Thyroid gland (tissue), 4 donors: ENCODE measurements at regions of chr14 and their contacts with region 1.

Region 1: DNA sequence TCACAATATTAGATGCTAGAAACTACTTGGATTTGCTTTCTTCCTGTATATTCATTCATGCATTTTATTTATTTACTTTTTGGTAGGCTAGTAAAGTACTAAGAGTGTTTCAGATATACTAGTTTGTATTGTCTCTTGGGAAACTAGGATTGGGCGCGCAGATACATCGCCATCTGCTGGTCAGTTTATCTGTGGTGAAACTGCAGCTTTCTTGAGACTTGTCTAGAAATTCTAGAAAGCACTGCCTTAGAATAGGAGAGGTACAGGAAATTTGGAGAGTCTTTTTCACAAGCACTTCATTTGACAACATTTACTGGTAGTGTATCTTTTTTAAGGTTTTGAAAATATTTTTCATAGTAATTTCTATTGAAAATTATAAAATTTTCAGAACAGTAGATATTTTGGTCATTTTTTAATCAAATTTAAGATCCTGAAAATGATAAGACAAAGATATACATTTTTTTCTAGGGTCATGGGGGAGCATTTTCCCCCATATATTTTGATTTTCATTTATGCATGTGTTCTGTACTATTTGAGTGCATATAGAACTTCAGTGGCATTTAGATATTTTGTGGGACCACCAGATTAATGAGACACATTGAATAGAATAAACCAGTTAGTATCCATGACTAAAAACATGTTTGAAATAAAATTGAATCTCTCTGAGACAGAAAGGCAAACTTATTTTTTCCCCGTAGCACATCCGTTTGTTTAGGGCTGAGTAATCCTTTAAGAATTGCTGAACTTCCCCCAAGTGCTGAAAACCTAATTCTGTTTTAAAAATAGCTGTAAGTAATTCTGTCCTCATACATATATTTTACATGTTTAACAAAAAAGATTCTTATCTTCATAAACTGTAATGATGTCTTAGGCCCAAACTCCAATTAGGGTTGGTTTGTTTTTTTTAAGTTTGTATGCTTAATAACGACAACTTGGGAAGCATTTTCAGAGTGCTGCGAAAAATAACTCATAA is 44.5 kb downstream of the SLC38A6 start:
- DNase-seq: peak; percentile 47 to 50
- H3K4me3 ChIP-seq: no peak overlapping the region
- H3K27ac ChIP-seq: peak overlapping the region in 1 of 3 donors; percentile 1
- H3K4me1 ChIP-seq: no peaks in the 10 kb centered on the region
- H3K27me3 ChIP-seq: no peaks in the 10 kb centered on the region
- CTCF ChIP-seq: peak; percentile 59 to 93 (median 74)
- POLR2A ChIP-seq: no peak

Region 2: DNA sequence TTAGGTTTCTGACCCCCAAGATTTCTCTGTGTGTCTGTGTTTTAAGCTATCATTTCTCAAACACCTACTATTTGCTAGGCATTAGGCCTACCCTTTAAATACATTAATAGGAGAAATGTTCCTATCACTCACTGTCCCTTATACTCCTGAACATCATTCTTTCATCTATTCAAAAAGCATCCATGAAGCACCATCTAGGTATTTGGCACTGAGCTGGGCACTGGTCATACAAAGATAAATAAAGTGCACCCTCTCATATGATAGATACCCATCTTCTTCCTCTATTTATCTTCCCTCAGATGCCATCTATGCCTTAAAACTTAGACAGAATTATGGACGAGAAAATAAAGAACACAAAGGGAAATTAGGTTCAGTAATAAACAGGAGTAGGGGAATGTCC is 396.6 kb before region 1 on chr14:
- intact Hi-C with region 1: loop called (anchors 5 kb)
- DNase-seq: no peak
- H3K4me3 ChIP-seq: no peak overlapping the region
- H3K27ac ChIP-seq: no peak overlapping the region
- H3K4me1 ChIP-seq: no peaks in the 10 kb centered on the region
- H3K27me3 ChIP-seq: no peaks in the 10 kb centered on the region
- CTCF ChIP-seq: no peak
- POLR2A ChIP-seq: no peak

Region 3: GRCh38 chr14:61252369-61253063 is 227.0 kb after region 1 on chr14:
- intact Hi-C with region 1: loop called (anchors 10 kb)
- DNase-seq: peak; percentile 80 to 83
- H3K4me3 ChIP-seq: no peak overlapping the region
- H3K27ac ChIP-seq: no peak overlapping the region
- H3K4me1 ChIP-seq: no peaks in the 10 kb centered on the region
- H3K27me3 ChIP-seq: no peaks in the 10 kb centered on the region
- CTCF ChIP-seq: peak; percentile 46 to 92 (median 86)
- POLR2A ChIP-seq: no peak